HCT116 (cell line): ENCODE measurements at regions of chr3 and their contacts with region 1.

Region 1: GRCh38 chr3:47781685-47782445 is at the start of gene SMARCC1:
- DNase-seq: peak; percentile 93
- ATAC-seq: peak; percentile 92
- H3K4me3 ChIP-seq: peak within 1 kb of the TSS; percentile 89 to 99
- H3K27ac ChIP-seq: peak within 1 kb of the TSS; percentile 97
- H3K4me1 ChIP-seq: peaks cover 11 to 18% of the 10 kb centered on the region in 2 experiments
- H3K27me3 ChIP-seq: no peaks in the 10 kb centered on the region
- CTCF ChIP-seq: no peak
- POLR2A ChIP-seq: peak; percentile 94
- RAD21 ChIP-seq: no peak
- total RNA-seq, gene SMARCC1: 168 TPM

Region 2: DNA sequence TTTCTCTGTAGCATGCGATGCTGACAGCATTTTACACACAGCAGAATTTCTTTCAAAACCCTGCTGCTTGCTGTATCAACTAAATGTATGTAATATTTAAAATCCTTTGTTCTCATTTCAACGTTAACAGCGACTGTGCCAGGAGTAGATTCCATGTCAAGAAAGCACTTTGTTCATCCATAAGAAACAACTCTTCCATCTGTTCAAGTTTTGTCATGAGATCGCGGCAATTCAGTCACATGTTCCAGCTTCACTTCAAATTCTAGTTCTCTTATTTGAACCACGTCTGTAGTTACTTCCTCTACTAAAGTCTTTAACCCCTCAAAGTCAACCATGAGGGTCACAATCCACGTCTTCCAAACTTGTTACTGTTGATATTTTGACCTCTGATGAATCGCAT is 50.8 kb before region 1 on chr3:
- CTCF ChIA-PET with region 1: no interaction called
- POLR2A ChIA-PET with region 1: no interaction called
- RAD21 ChIA-PET with region 1: no interaction called
- intact Hi-C with region 1: loop called (anchors 5 kb)
- DNase-seq: no peak
- ATAC-seq: no peak
- H3K4me3 ChIP-seq: no peak overlapping the region
- H3K27ac ChIP-seq: no peak overlapping the region
- H3K4me1 ChIP-seq: peaks cover 4 to 10% of the 10 kb centered on the region in 2 experiments
- H3K27me3 ChIP-seq: no peaks in the 10 kb centered on the region
- CTCF ChIP-seq: no peak
- POLR2A ChIP-seq: no peak
- RAD21 ChIP-seq: no peak

Region 3: DNA sequence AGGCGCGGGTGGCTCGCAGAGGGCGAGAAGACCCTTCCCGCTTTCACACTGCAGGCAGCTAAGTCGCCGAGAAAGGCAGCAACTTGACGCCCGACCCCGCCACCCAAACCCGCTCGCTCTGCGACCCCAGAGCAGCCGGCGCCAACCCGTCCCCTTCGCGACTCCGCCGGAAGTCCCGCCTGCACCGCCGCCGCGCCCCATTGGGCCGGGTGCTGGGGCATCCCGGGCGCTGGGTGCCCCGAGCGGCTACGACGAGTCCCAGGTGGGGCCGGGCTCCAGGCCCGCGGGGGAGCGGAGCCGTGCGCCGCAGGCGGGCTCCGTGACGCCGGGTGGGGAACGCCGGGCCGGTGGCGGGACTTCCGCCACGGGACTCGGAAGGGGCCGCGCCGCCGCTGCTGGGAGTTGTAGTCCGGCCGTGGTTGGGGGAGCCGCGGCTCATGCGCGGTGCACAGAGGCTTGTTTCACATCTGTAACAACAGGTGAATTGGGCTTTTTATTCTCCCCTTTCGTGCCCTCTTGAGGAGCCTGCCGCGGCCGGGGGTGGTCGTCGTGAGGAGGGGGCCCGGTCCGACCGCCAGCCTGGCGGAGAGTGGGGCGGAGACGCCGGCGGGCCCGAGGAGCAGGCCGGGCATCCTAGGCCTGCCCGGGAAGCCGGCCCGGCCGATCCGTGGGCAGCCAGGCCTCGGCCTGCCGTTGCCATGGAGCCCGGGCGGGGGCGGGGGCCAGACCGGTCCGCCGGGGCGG is 21.0 kb after region 1 on chr3 and contains the start of gene DHX30:
- CTCF ChIA-PET with region 1: no interaction called
- POLR2A ChIA-PET with region 1: no interaction called
- RAD21 ChIA-PET with region 1: no interaction called
- intact Hi-C with region 1: no loop called
- DNase-seq: no peak
- ATAC-seq: peak; percentile 85
- H3K4me3 ChIP-seq: peak within 1 kb of the TSS; percentile 67 to 74
- H3K27ac ChIP-seq: peak within 1 kb of the TSS; percentile 99
- H3K4me1 ChIP-seq: peaks cover 17 to 35% of the 10 kb centered on the region in 2 experiments
- H3K27me3 ChIP-seq: no peaks in the 10 kb centered on the region
- CTCF ChIP-seq: no peak
- POLR2A ChIP-seq: peak; percentile 65
- RAD21 ChIP-seq: no peak
- total RNA-seq, gene DHX30: 114 TPM

Region 4: GRCh38 chr3:47813551-47814177 is 31.8 kb after region 1 on chr3:
- CTCF ChIA-PET with region 1: no interaction called
- POLR2A ChIA-PET with region 1: no interaction called
- RAD21 ChIA-PET with region 1: no interaction called
- intact Hi-C with region 1: no loop called
- DNase-seq: no peak
- ATAC-seq: no peak
- H3K4me3 ChIP-seq: no peak overlapping the region
- H3K27ac ChIP-seq: no peak overlapping the region
- H3K4me1 ChIP-seq: no peaks in the 10 kb centered on the region
- H3K27me3 ChIP-seq: no peaks in the 10 kb centered on the region
- CTCF ChIP-seq: no peak
- POLR2A ChIP-seq: no peak
- RAD21 ChIP-seq: no peak